ENCODE measurements at regions of chr2 and their contacts with region 1.

Region 1: DNA sequence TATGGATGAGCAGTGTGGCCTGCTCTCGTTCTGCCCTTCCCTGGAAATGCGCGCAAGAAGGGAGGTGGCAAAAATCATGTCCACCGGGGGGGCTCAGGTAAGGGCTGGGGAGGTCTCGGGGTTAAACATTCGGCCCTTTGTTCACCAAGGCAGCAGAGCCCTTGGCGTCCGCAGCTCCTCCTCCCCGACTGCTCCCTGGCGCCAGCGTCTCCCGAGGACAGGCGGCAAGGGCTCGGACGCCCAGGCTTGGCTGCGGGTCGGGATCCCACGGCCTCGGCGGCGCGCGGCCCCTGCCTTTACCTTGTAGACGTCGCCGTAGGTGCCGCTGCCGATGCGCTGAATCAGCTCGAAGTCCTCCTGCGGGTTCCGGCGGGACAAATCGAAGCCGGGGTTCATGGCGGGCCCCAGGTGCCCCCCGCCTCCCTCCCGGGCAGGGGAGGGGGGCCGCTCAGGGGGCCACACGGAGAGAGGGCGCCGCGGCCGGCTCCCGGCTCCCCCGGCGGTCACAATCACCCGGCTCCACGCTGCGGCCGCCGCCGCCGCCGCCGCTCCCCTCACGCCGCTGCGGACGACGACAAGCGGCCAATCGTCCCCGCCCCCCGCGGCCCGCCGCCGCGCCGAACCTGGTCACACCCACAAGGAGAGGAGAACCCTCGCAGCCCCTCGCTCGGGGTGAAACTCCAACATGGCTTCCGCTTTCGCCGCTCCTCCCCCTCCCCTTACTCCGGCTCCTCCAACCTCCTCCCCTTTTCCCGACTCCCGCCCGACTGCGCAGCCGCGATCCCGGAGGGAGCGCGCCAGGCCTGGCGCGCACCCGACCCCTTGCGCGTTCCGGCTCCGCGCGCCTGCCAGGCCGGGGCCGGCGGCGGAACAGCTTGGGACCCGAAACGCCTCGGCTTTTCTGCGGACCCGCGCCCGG is at the start of gene MAP4K3:
- DNase-seq: peak; percentile 88
- ATAC-seq: peak; percentile 70
- H3K4me3 Mint-ChIP-seq: peak within 1 kb of the TSS; percentile 86
- H3K27ac Mint-ChIP-seq: peak within 1 kb of the TSS; percentile 80
- H3K4me1 Mint-ChIP-seq: peaks cover 65% of the 10 kb centered on the region
- H3K27me3 Mint-ChIP-seq: no peaks in the 10 kb centered on the region
- total RNA-seq, gene MAP4K3: 8.1 to 11.8 TPM

Region 2: DNA sequence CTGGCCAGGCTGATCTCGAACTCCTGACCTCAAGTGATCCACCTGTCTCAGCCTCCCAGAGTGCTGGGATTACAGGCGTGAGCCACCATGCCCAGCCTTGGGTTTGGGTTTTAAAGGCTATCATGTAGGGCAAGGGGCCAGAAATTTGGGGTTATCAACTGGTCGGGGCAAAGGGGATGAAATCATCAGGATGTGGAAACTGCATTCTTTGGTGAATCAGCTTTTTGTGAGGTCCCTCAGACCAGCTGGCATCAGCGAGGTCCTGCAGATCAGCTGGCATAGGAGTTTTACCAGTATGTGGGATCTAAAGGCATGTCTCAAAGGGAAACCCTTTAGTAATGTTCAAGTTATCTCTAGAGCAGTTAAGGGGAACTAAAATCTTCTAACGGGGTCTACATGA is 665.2 kb before region 1 on chr2:
- CTCF ChIA-PET with region 1: no interaction called
- POLR2A ChIA-PET with region 1: no interaction called
- intact Hi-C with region 1: loop called in 1 of 2 experiments (anchors 10 kb)
- DNase-seq: no peak
- ATAC-seq: no peak
- H3K4me3 Mint-ChIP-seq: no peak overlapping the region
- H3K27ac Mint-ChIP-seq: no peak overlapping the region
- H3K4me1 Mint-ChIP-seq: no peaks in the 10 kb centered on the region
- H3K27me3 Mint-ChIP-seq: peaks cover 13% of the 10 kb centered on the region

Region 3: DNA sequence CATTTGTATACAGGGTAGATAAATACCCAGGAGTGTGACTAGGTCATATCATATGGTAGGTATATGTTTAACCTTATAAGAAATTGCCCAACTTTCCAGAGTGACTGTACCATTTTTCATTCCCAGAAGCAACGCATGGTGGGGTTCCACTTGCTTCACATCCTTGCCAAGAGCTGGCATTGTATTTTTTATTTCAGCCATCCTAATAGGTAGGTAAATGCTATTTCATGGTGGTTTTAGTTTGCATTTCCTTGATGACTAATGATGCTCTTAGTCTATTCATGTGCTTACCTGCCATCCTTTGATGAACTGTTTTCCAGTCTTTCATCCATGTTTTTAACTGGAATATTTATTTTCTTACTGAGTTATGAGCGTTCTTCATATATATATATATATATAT is 51.7 kb before region 1 on chr2:
- CTCF ChIA-PET with region 1: interaction called, 9 read pairs
- POLR2A ChIA-PET with region 1: interaction called, 14 read pairs
- intact Hi-C with region 1: no loop called
- DNase-seq: no peak
- ATAC-seq: no peak
- H3K4me3 Mint-ChIP-seq: no peak overlapping the region
- H3K27ac Mint-ChIP-seq: no peak overlapping the region
- H3K4me1 Mint-ChIP-seq: peaks cover 26% of the 10 kb centered on the region
- H3K27me3 Mint-ChIP-seq: no peaks in the 10 kb centered on the region

Region 4: GRCh38 chr2:39411181-39411944 is 25.5 kb before region 1 on chr2:
- CTCF ChIA-PET with region 1: interaction called, 3 read pairs
- POLR2A ChIA-PET with region 1: no interaction called
- intact Hi-C with region 1: loop called in 1 of 2 experiments (anchors 2 kb)
- DNase-seq: no peak
- ATAC-seq: peak; percentile 70
- H3K4me3 Mint-ChIP-seq: no peak overlapping the region
- H3K27ac Mint-ChIP-seq: peak overlapping the region; percentile 1
- H3K4me1 Mint-ChIP-seq: peaks cover 62% of the 10 kb centered on the region
- H3K27me3 Mint-ChIP-seq: no peaks in the 10 kb centered on the region

Region 5: GRCh38 chr2:39469807-39470206 is 33.0 kb after region 1 on chr2:
- CTCF ChIA-PET with region 1: interaction called, 4 read pairs
- POLR2A ChIA-PET with region 1: interaction called, 6 read pairs
- intact Hi-C with region 1: loop called in 1 of 2 experiments (anchors 2 kb)
- DNase-seq: peak; percentile 43
- ATAC-seq: peak; percentile 63
- H3K4me3 Mint-ChIP-seq: no peak overlapping the region
- H3K27ac Mint-ChIP-seq: no peak overlapping the region
- H3K4me1 Mint-ChIP-seq: peaks cover 36% of the 10 kb centered on the region
- H3K27me3 Mint-ChIP-seq: no peaks in the 10 kb centered on the region

Region 6: GRCh38 chr2:39513641-39514094 is 76.8 kb after region 1 on chr2:
- CTCF ChIA-PET with region 1: interaction called, 3 read pairs
- POLR2A ChIA-PET with region 1: no interaction called
- intact Hi-C with region 1: loop called (anchors 1 to 5 kb)
- DNase-seq: peak; percentile 84
- ATAC-seq: peak; percentile 83
- H3K4me3 Mint-ChIP-seq: peak overlapping the region; percentile 21
- H3K27ac Mint-ChIP-seq: peak overlapping the region; percentile 83
- H3K4me1 Mint-ChIP-seq: peaks cover 33% of the 10 kb centered on the region
- H3K27me3 Mint-ChIP-seq: peaks cover 3% of the 10 kb centered on the region

Measured in activated CD4-positive, alpha-beta T cell treated with anti-CD3 and anti-CD28 coated beads for 36 hours (primary cell).